H1 (cell line): ENCODE measurements at regions of chr6 and their contacts with region 1.

Region 1: GRCh38 chr6:108492131-108492766 is 68.5 kb upstream of the FOXO3 start:
- DNase-seq: no peak
- H3K4me3 ChIP-seq: no peak overlapping the region
- H3K27ac ChIP-seq: no peak overlapping the region
- H3K4me1 ChIP-seq: no peaks in the 10 kb centered on the region
- H3K27me3 ChIP-seq: no peaks in the 10 kb centered on the region
- CTCF ChIP-seq: peak in 2 of 3 experiments; percentile 39 to 61; a peak in 2 of 4 replicates
- EP300 ChIP-seq: no peak
- POLR2A ChIP-seq: no peak
- RAD21 ChIP-seq: peak; percentile 68 to 70

Region 2: GRCh38 chr6:108168501-108169463 is 323.5 kb before region 1 on chr6:
- CTCF ChIA-PET with region 1: interaction called, 11 read pairs
- POLR2A ChIA-PET with region 1: no interaction called
- DNase-seq: peak in 1 of 2 experiments; percentile 77
- H3K4me3 ChIP-seq: peak overlapping the region in 3 of 4 experiments; percentile 9 to 49 (median 34); a peak in 4 of 8 replicates
- H3K27ac ChIP-seq: no peak overlapping the region
- H3K4me1 ChIP-seq: peaks cover 7 to 54% (median 37%) of the 10 kb centered on the region in 4 experiments
- H3K27me3 ChIP-seq: peaks cover 93 to 100% (median 97%) of the 10 kb centered on the region in 4 experiments
- CTCF ChIP-seq: peak in 2 of 3 experiments; percentile 23 to 34; a peak in 3 of 4 replicates
- EP300 ChIP-seq: no peak
- POLR2A ChIP-seq: no peak
- RAD21 ChIP-seq: peak in 1 of 2 experiments; percentile 22; a peak in 1 of 4 replicates

Region 3: DNA sequence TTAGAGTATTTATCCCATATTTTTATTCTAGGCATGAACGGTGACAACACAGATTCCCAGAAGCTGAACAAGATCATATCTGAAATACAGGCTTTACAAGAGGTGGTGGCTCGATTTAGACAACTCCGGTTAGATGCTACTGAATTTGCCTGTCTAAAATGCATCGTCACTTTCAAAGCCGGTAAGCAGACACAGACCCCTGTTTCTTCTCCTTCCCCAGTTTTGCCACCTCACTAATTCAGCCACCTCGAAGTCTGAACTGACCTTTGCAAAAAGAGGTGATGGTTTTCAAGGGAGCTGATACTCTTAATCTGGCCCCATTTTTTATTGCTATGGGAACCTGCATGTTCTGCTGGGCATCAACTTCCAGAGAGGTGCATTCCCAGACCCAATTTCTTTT is 311.5 kb before region 1 on chr6:
- CTCF ChIA-PET with region 1: interaction called, 38 read pairs
- POLR2A ChIA-PET with region 1: no interaction called
- DNase-seq: no peak
- H3K4me3 ChIP-seq: no peak overlapping the region
- H3K27ac ChIP-seq: no peak overlapping the region
- H3K4me1 ChIP-seq: peaks cover 0 to 13% (median 9%) of the 10 kb centered on the region in 4 experiments; a peak in 6 of 7 replicates
- H3K27me3 ChIP-seq: peaks cover 25 to 34% (median 31%) of the 10 kb centered on the region in 4 experiments
- CTCF ChIP-seq: no peak
- EP300 ChIP-seq: no peak
- POLR2A ChIP-seq: no peak
- RAD21 ChIP-seq: no peak

Region 4: GRCh38 chr6:108368431-108369030 is 123.7 kb before region 1 on chr6:
- CTCF ChIA-PET with region 1: interaction called, 17 read pairs
- POLR2A ChIA-PET with region 1: no interaction called
- DNase-seq: no peak
- H3K4me3 ChIP-seq: no peak overlapping the region
- H3K27ac ChIP-seq: no peak overlapping the region
- H3K4me1 ChIP-seq: no peaks in the 10 kb centered on the region
- H3K27me3 ChIP-seq: no peaks in the 10 kb centered on the region
- CTCF ChIP-seq: no peak
- EP300 ChIP-seq: no peak
- POLR2A ChIP-seq: no peak
- RAD21 ChIP-seq: no peak

Region 5: GRCh38 chr6:108476847-108477430 is 15.3 kb before region 1 on chr6:
- CTCF ChIA-PET with region 1: interaction called, 53 read pairs
- POLR2A ChIA-PET with region 1: no interaction called
- DNase-seq: no peak
- H3K4me3 ChIP-seq: no peak overlapping the region
- H3K27ac ChIP-seq: no peak overlapping the region
- H3K4me1 ChIP-seq: no peaks in the 10 kb centered on the region
- H3K27me3 ChIP-seq: no peaks in the 10 kb centered on the region
- CTCF ChIP-seq: no peak
- EP300 ChIP-seq: no peak
- POLR2A ChIP-seq: no peak
- RAD21 ChIP-seq: no peak

Region 6: GRCh38 chr6:108518714-108519576 is 26.7 kb after region 1 on chr6:
- CTCF ChIA-PET with region 1: interaction called, 17 read pairs
- POLR2A ChIA-PET with region 1: no interaction called
- DNase-seq: no peak
- H3K4me3 ChIP-seq: no peak overlapping the region
- H3K27ac ChIP-seq: no peak overlapping the region
- H3K4me1 ChIP-seq: no peaks in the 10 kb centered on the region
- H3K27me3 ChIP-seq: no peaks in the 10 kb centered on the region
- CTCF ChIP-seq: peak; percentile 51 to 77 (median 70)
- EP300 ChIP-seq: no peak
- POLR2A ChIP-seq: no peak
- RAD21 ChIP-seq: peak; percentile 55 to 72

Region 7: DNA sequence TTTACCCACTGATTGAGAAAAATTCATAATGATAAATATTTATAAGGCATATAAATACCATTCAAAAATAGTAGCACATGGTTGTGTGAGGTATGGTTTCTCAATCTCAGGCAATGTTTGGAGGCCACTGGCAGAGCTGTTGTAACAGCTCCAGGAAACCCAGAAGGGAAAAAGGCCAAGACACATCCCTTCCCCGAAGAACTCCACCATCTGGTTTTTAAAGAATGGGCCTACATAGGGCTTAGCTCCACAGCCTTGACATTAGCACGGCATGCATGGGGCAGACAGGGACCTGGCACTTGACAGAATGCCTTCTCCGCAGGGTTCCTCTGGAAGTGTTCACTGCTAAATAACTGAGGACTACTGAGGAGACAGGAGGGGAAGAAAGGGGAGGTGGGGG is 52.3 kb after region 1 on chr6:
- CTCF ChIA-PET with region 1: no interaction called
- POLR2A ChIA-PET with region 1: no interaction called
- DNase-seq: no peak
- H3K4me3 ChIP-seq: no peak overlapping the region
- H3K27ac ChIP-seq: no peak overlapping the region
- H3K4me1 ChIP-seq: peaks cover 0 to 9% (median 1%) of the 10 kb centered on the region in 4 experiments; a peak in 3 of 7 replicates
- H3K27me3 ChIP-seq: no peaks in the 10 kb centered on the region
- CTCF ChIP-seq: no peak
- EP300 ChIP-seq: no peak
- POLR2A ChIP-seq: no peak
- RAD21 ChIP-seq: no peak